ENCODE measurements at regions of chrX and their contacts with region 1.

Region 1: DNA sequence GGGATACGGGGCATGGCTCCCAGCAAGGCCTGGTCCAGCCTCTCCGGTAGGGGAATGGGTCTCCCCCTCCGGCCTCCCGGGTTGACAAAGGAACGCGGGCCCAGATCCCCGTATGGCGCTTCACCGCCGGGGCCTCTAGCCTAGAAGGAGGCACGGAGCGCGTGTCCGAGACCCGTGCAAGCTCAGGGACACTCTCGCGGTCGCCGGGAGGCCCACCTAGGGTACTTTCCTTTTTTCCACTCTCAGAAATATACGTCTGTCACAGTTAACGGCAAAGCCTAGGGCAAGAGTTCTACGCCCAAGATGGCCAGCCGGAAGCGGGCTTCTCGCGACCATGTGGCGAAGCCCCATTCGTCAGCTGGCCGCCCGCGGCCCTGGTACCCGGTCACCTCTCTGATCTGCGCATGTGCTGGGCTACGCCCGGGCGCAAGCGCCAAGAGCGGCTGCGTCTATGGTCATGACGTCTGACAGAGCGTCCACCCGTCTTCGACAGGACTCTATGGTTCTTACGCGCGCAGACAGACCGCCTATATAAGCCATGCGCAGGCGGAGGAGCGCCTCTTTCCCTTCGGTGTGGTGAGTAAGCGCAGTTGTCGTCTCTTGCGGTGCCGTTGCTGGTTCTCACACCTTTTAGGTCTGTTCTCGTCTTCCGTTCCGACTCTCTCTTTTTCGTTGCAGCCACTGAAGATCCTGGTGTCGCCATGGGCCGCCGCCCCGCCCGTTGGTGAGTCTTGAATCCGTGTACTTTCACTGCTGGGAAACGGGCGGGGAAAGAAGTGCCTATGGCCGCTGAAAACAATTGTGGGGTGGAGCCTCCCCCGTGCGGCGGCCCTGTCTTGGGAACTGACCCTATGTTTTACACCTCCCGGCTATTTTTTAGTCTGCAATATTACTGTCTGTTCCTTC is at the start of gene RPL10:
- DNase-seq: peak; percentile 64 to 96 (median 87)
- ATAC-seq: peak; percentile 75 to 82
- H3K4me3 Mint-ChIP-seq: peak within 1 kb of the TSS; percentile 94 to 100 (median 96)
- H3K27ac Mint-ChIP-seq: peak within 1 kb of the TSS; percentile 97 to 100 (median 99)
- H3K4me1 Mint-ChIP-seq: peaks cover 10 to 32% (median 22%) of the 10 kb centered on the region in 4 donors
- H3K27me3 Mint-ChIP-seq: no peaks in the 10 kb centered on the region
- polyA plus RNA-seq, gene RPL10: 5,585 to 7,081 (median 6,663) TPM

Region 2: DNA sequence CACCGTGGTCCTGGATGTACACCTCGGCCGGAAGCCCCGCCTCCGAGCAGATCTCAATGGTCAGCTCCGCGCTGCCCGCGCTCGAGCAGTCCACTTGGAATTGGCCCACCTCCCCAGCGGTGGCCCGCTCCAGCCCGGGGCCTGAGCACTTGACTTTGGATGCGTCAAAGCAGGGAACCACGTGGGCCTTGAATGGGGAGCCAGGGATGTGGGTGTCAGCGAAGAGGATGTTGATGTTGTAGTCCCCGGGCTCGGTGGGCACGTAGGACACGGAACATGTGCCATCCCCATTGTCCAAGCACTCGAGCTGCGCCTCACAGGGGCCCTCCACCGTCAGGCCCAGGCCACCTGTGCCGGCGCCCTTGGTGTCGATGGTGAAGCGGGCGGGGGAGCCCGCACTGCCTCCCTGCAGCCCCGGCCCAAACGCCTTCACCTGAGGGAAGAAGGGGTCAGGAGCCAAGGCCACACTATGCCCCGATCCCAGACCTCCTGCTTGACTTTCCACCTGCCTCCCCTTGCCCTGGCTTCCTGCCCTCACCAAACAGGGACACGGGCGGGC is 37.8 kb before region 1 on chrX:
- POLR2A ChIA-PET with region 1: no interaction called
- DNase-seq: peak in 1 of 10 donors; percentile 44
- ATAC-seq: no peak
- H3K4me3 Mint-ChIP-seq: peak overlapping the region in 1 of 10 donors; percentile 42
- H3K27ac Mint-ChIP-seq: peak overlapping the region in 1 of 10 donors; percentile 40
- H3K4me1 Mint-ChIP-seq: peaks cover 5 to 43% (median 15%) of the 10 kb centered on the region in 4 donors
- H3K27me3 Mint-ChIP-seq: no peaks in the 10 kb centered on the region

Region 3: DNA sequence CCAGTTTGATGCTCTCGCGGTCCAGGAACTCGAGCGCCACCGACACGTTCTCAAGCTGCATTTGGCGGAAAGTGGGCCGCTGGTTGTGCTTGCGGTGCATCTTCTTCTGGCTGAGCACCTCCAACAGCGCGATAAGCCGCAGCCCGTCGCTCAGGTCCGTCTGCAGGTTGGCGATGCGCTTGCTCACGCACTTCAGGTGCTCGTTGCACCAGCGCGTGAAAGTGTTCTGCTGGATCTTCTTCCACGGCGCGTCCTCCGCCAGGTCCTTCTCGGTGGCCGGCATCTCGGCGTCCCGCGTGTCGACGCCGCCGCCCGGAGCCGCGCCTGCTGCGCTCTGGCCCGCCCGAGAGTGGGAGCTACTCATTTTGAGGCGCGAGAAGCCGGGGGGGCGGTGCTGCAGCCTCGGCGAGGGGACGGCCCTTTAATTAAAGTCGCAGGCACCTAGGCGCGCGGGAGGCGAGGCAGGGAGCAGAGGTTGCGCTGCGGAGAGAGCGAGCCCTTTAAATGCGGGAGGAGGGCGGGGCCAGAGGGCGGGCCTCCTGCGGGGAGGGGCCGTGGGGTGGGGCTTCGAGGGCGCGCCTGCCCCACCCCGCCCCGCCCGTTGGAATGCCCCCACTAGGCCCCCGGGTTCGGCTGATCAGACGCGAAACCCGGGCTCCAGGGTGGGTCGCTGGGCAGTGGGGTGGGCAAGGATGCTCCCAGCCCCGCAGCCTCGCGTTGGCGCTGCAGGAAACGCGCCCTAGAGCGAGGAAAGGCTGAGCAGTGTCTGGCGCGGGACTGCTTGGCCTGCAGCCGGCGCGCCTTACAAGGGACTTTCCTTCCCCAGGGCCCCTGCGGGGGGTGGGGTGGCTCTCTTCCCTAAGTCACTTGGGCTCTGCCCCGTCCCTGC is 26.9 kb before region 1 on chrX:
- POLR2A ChIA-PET with region 1: interaction called, 29 read pairs
- DNase-seq: peak; percentile 80 to 96 (median 88)
- ATAC-seq: peak; percentile 61 to 71
- H3K4me3 Mint-ChIP-seq: peak overlapping the region; percentile 78 to 96 (median 85)
- H3K27ac Mint-ChIP-seq: peak overlapping the region in 9 of 10 donors; percentile 25 to 92 (median 77)
- H3K4me1 Mint-ChIP-seq: peaks cover 4 to 30% (median 22%) of the 10 kb centered on the region in 4 donors
- H3K27me3 Mint-ChIP-seq: no peaks in the 10 kb centered on the region

Region 4: GRCh38 chrX:154411322-154411980 is 13.4 kb after region 1 on chrX and contains the start of gene TAFAZZIN:
- POLR2A ChIA-PET with region 1: interaction called, 101 read pairs
- DNase-seq: peak; percentile 51 to 81 (median 66)
- ATAC-seq: peak; percentile 71 to 77
- H3K4me3 Mint-ChIP-seq: peak within 1 kb of the TSS; percentile 85 to 94 (median 90)
- H3K27ac Mint-ChIP-seq: peak within 1 kb of the TSS; percentile 87 to 97 (median 96)
- H3K4me1 Mint-ChIP-seq: peaks cover 12 to 22% (median 16%) of the 10 kb centered on the region in 4 donors
- H3K27me3 Mint-ChIP-seq: no peaks in the 10 kb centered on the region
- polyA plus RNA-seq, gene TAFAZZIN: 29.3 to 39.8 (median 37.8) TPM

Region 5: GRCh38 chrX:154436374-154436982 is 38.4 kb after region 1 on chrX:
- POLR2A ChIA-PET with region 1: interaction called, 14 read pairs
- DNase-seq: peak in 8 of 10 donors; percentile 27 to 75 (median 52)
- ATAC-seq: peak; percentile 80 to 81
- H3K4me3 Mint-ChIP-seq: peak overlapping the region; percentile 75 to 88 (median 80)
- H3K27ac Mint-ChIP-seq: peak overlapping the region; percentile 78 to 96 (median 90)
- H3K4me1 Mint-ChIP-seq: peaks cover 3 to 28% (median 23%) of the 10 kb centered on the region in 4 donors
- H3K27me3 Mint-ChIP-seq: no peaks in the 10 kb centered on the region

Region 6: DNA sequence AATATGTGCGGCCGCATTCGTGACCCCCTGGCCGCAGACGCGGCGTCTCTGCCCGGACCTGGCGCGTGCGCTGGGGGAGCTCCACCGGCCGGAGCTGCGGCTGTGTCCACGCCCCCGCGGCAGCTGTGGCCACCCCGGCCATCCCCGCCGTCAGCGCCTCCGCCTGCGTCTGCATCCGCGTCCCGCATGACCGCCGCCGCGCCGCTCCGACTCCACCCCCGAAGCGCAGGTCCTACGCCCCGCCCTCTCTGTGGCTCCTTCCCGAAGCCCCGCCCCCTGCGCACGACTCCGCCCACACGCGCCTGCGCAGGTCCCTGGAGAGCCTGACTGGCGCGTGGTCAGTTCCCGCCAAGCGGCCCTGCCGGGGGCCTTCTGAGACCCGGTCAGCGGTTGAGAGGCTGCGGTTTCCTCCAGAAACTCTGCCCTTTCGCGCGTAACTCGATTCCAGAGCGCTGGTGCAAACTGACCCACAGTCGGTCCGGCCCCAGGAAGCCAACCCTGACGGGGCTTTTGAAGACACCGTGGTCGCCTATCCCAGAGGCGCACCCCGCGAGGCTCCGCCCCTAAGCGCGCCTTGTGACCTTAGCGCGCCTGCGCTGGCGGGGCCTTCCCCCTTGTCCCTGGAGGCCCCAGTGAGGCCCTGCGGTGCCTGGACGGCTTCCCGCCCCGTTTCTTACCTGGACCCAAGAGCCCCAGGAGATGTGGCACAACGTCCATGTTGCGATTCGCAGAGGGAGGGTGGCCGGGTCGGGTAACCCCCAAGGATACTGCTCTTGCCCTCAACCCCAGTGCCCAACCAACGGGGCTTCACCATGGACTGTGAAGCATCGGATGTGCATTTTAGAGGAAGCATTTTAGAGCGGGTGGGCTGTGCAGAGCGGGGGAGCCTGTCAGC is 80.9 kb after region 1 on chrX and contains the start of gene LAGE3:
- POLR2A ChIA-PET with region 1: interaction called, 102 read pairs
- DNase-seq: peak; percentile 84 to 98 (median 92)
- ATAC-seq: peak; percentile 89 to 91
- H3K4me3 Mint-ChIP-seq: peak within 1 kb of the TSS; percentile 79 to 91 (median 83)
- H3K27ac Mint-ChIP-seq: peak within 1 kb of the TSS; percentile 75 to 95 (median 90)
- H3K4me1 Mint-ChIP-seq: peaks cover 0 to 34% (median 23%) of the 10 kb centered on the region in 4 donors
- H3K27me3 Mint-ChIP-seq: no peaks in the 10 kb centered on the region
- polyA plus RNA-seq, gene LAGE3: 62.6 to 81.8 (median 72.7) TPM

Region 7: GRCh38 chrX:154515878-154516655 is 118.0 kb after region 1 on chrX and contains the start of gene FAM3A:
- POLR2A ChIA-PET with region 1: interaction called, 38 read pairs
- DNase-seq: peak; percentile 80 to 96 (median 90)
- ATAC-seq: peak; percentile 84 to 93
- H3K4me3 Mint-ChIP-seq: peak within 1 kb of the TSS; percentile 77 to 91 (median 85)
- H3K27ac Mint-ChIP-seq: peak within 1 kb of the TSS; percentile 87 to 95 (median 93)
- H3K4me1 Mint-ChIP-seq: peaks cover 10 to 33% (median 31%) of the 10 kb centered on the region in 4 donors
- H3K27me3 Mint-ChIP-seq: no peaks in the 10 kb centered on the region
- polyA plus RNA-seq, gene FAM3A: 24.3 to 33.3 (median 26.0) TPM

Region 8: DNA sequence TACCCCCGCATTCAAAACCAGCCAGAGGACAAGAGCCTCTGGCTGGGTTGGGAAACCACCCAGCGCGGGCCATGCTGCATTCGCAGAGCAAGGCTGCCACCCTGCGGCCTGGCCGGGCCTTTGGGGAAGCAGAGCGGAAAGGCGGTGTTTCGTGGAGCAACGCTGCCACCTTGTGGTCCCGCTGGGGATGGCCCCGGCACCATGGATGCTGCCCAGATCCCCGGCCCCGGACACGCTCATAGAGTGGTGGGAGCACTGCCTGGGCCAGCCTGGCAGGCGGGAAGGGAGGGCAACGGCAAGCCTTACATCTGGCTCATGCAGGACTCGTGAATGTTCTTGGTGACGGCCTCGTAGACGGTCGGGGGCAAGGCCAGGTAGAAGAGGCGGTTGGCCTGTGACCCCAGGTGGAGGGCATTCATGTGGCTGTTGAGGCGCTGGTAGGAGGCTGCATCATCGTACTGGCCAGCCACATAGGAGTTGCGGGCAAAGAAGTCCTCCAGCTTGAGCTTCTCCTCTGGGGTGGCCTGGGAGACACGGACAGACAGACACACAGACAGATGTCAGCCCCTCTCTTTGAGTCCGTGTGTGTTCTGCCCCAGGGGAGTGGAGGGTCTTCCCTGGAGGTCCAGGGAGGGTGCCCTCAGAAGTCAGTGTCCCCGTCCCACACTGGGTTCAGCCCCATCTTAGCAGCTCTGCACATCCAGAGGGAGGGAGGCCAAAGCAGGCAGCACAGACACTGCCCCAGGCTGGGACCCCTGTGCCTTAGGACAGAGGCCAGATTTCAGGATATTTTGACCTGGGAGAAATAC is 137.0 kb after region 1 on chrX:
- POLR2A ChIA-PET with region 1: interaction called, 35 read pairs
- DNase-seq: peak; percentile 77 to 93 (median 85)
- ATAC-seq: peak; percentile 95 to 97
- H3K4me3 Mint-ChIP-seq: no peak overlapping the region
- H3K27ac Mint-ChIP-seq: peak overlapping the region in 6 of 10 donors; percentile 41 to 90 (median 66)
- H3K4me1 Mint-ChIP-seq: peaks cover 0 to 15% (median 8%) of the 10 kb centered on the region in 4 donors
- H3K27me3 Mint-ChIP-seq: no peaks in the 10 kb centered on the region